A549 (cell line): ENCODE measurements at regions of chr4 and their contacts with region 1.

Region 1: DNA sequence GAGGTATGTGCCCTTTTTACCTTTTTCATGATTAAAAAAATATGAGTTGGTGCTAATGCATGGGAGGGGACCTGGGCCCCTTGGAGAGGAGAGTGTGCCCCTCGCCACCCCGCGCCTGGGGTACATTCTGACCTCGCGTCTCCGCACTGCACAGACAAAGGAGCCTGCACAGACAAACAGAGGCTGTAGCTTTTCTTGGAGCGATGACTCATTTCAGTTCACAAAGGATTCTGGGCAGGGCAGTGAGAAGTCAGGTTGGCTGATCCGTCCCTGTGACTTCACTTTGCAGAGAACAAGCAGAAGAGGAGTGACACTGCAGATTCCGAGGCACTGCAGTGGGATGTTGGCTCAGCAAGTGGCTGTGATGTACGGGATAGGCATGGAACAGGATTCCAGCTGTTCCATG is 82.9 kb downstream of the STOX2 start:
- DNase-seq: peak; percentile 76 to 95
- ATAC-seq: peak; percentile 95 to 96
- H3K4me3 ChIP-seq: peak overlapping the region; percentile 47
- H3K27ac ChIP-seq: peak overlapping the region; percentile 88 to 91
- H3K4me1 ChIP-seq: peaks cover 22% of the 10 kb centered on the region
- CTCF ChIP-seq: no peak
- EP300 ChIP-seq: no peak
- POLR2A ChIP-seq: peak; percentile 81
- RAD21 ChIP-seq: no peak; a peak in 1 of 5 replicates

Region 2: DNA sequence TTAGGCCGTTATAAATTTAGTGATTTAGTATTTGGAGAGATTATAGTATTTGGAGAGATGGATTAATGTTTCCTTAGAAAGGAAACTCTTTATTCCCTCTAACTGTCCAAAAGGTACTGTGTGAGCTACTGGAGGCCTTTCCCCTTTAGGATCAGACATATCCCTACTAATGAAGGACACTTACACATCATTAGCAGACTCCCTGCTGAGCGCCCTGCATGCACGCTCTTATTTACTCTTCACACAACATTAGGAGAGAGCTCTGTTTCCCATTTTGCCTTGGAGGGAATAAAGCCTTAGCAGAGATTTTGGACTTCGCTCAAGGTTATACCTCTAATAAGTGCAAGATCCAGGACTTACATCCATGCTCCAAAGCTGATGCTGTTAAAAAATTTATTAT is 100.6 kb before region 1 on chr4:
- CTCF ChIA-PET with region 1: no interaction called
- POLR2A ChIA-PET with region 1: no interaction called
- DNase-seq: no peak
- ATAC-seq: no peak
- H3K4me3 ChIP-seq: no peak overlapping the region
- H3K27ac ChIP-seq: no peak overlapping the region
- H3K4me1 ChIP-seq: no peaks in the 10 kb centered on the region
- CTCF ChIP-seq: no peak
- EP300 ChIP-seq: no peak
- POLR2A ChIP-seq: no peak
- RAD21 ChIP-seq: no peak

Region 3: GRCh38 chr4:183905081-183905592 is 82.9 kb before region 1 on chr4 and contains the start of gene STOX2:
- CTCF ChIA-PET with region 1: no interaction called
- POLR2A ChIA-PET with region 1: interaction called, 21 read pairs
- DNase-seq: peak; percentile 71 to 73
- ATAC-seq: peak; percentile 92 to 95
- H3K4me3 ChIP-seq: peak within 1 kb of the TSS; percentile 66
- H3K27ac ChIP-seq: peak within 1 kb of the TSS; percentile 65 to 87
- H3K4me1 ChIP-seq: 0 out of 3 replicates have a peak, but pooled peaks cover 3% of the 10 kb centered on the region
- CTCF ChIP-seq: no peak
- EP300 ChIP-seq: no peak
- POLR2A ChIP-seq: peak; percentile 68
- RAD21 ChIP-seq: no peak
- polyA plus RNA-seq, gene STOX2: 5.2 and 7.0 TPM in 2 replicates

Region 4: GRCh38 chr4:183936574-183937345 is 51.2 kb before region 1 on chr4:
- CTCF ChIA-PET with region 1: no interaction called
- POLR2A ChIA-PET with region 1: no interaction called
- DNase-seq: peak in 1 of 2 experiments; percentile 3
- ATAC-seq: no peak
- H3K4me3 ChIP-seq: no peak overlapping the region
- H3K27ac ChIP-seq: peak overlapping the region; percentile 20 to 48; a peak in 4 of 6 replicates
- H3K4me1 ChIP-seq: peaks cover 12% of the 10 kb centered on the region
- CTCF ChIP-seq: no peak
- EP300 ChIP-seq: no peak
- POLR2A ChIP-seq: no peak
- RAD21 ChIP-seq: no peak

Region 5: GRCh38 chr4:183971929-183972490 is 16.0 kb before region 1 on chr4:
- CTCF ChIA-PET with region 1: no interaction called
- POLR2A ChIA-PET with region 1: no interaction called
- DNase-seq: no peak
- ATAC-seq: no peak
- H3K4me3 ChIP-seq: no peak overlapping the region
- H3K27ac ChIP-seq: no peak overlapping the region
- H3K4me1 ChIP-seq: no peaks in the 10 kb centered on the region
- CTCF ChIP-seq: no peak
- EP300 ChIP-seq: no peak
- POLR2A ChIP-seq: no peak
- RAD21 ChIP-seq: no peak